Gastrocnemius medialis (tissue), 4 donors: ENCODE measurements at regions of chr2 and their contacts with region 1.

Region 1: DNA sequence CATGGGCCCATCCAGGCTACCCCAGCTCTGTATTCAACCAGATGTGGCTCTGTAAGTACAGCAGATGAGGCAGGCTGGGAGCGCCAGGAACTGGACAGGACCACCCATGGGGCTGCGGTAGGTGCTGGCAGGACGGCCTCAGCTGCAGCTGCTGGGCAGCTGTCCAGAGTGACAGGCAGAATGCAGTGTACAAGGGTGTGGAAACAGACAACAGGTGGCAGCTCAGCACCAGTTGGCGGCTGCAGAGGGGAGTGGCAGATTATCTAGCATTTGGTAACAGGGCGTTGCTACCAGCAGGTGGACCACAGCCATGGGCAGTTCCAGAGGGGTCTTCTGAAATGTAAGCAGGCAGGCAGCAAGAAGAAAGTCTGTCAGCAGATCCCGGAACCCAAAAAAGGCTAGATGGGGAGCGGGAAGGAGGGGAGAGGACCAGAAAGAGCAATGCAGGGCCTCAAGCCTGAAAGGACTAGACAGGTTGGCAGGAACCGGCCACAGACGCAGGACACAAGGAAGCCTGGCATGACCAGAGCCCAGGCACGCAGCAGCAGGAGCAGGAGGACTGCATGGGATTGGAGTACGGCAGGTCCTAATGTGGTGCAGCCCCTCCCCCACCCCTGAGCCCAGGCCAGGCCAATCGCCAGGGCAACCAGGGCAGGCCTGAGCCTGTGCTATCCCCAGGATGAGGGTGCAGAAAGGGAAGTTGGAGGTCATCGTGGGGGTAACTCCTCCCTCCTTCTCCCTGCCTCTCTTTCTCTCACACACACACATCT is 24.7 kb downstream of the PKDCC start:
- DNase-seq: peak; percentile 91 to 98
- ATAC-seq: peak; percentile 87 to 88
- H3K4me3 ChIP-seq: no peak overlapping the region
- H3K27ac ChIP-seq: peak overlapping the region; percentile 86 to 94 (median 90)
- H3K4me1 ChIP-seq: peaks cover 39 to 42% of the 10 kb centered on the region in 2 donors
- H3K27me3 ChIP-seq: no peaks in the 10 kb centered on the region
- CTCF ChIP-seq: peak in 3 of 5 experiments; percentile 28 to 44 (median 44)
- POLR2A ChIP-seq: peak in 1 of 2 donors; percentile 32

Region 2: GRCh38 chr2:41853427-41854216 is 218.9 kb before region 1 on chr2:
- in situ Hi-C with region 1: no loop called
- intact Hi-C with region 1: loop called (anchors 2 kb)
- DNase-seq: no peak
- ATAC-seq: no peak
- H3K4me3 ChIP-seq: no peak overlapping the region
- H3K27ac ChIP-seq: peak overlapping the region; percentile 83 to 93 (median 90)
- H3K4me1 ChIP-seq: peaks cover 12 to 19% of the 10 kb centered on the region in 2 donors
- H3K27me3 ChIP-seq: no peaks in the 10 kb centered on the region
- CTCF ChIP-seq: peak; percentile 59 to 79 (median 68)
- POLR2A ChIP-seq: no peak

Region 3: DNA sequence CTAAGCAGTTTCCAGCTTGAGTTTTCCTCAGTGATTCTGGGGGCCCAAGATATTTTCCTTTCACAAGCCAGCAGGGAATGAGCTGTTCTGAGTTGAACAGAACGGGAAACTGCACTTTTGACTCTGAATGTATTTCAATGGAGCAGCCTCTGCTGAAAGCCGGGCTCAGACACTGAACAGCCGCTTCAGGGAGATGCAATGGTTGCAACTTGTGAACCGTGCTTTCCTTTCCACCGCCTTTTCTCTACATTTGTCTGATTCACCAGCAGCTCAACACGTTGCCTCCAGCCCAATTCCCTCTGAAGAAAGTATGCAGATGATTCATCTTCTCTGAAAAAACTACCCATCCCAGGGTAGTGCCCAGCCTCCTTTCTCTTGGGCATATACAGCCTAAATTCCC is 144.0 kb before region 1 on chr2:
- in situ Hi-C with region 1: no loop called
- intact Hi-C with region 1: loop called (anchors 1 kb)
- DNase-seq: no peak
- ATAC-seq: no peak
- H3K4me3 ChIP-seq: no peak overlapping the region
- H3K27ac ChIP-seq: peak overlapping the region; percentile 89 to 98 (median 98)
- H3K4me1 ChIP-seq: peaks cover 75 to 83% of the 10 kb centered on the region in 2 donors
- H3K27me3 ChIP-seq: no peaks in the 10 kb centered on the region
- CTCF ChIP-seq: no peak
- POLR2A ChIP-seq: no peak

Region 4: DNA sequence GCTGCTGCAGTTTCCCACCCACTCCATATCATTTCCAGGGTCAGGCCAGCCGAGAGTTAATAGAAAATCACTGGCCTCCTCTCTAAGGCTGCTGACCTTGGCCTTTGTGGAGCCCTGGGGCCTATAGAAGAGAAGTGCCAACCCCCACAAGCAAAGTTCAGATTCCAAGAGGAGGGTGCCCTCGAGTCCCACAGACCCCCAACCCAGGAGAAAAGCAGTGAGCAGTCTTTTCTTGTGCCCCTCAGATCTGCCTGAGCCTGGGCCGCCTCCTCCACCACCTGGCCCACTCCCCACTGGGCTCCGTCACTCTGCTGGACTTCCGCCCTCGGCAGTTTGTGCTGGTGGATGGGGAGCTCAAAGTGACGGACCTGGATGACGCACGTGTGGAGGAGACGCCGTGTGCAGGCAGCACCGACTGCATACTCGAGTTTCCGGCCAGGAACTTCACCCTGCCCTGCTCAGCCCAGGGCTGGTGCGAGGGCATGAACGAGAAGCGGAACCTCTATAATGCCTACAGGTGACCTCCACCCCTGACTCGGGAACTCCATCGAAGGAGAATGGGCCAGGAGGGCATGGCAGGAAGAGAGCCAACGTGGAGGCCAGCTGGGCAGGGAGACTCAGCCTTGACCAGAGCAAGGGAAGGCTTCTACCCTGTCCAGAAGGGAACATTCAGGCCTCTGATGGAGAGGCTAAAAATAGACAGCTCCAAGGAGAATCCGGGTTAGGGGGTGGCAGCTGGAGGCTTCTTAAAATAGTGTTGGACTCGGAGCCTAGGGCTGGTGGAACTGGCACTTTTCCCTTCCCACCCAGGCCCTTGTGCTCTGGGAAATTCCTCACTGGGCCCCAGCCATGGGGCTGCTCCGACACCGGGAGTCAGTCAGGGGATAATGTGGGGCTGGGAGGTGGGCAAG is 18.5 kb before region 1 on chr2:
- in situ Hi-C with region 1: no loop called
- intact Hi-C with region 1: loop called (anchors 1 kb)
- DNase-seq: peak; percentile 81 to 94
- ATAC-seq: peak; percentile 74 to 80
- H3K4me3 ChIP-seq: peak overlapping the region; percentile 24 to 86 (median 52)
- H3K27ac ChIP-seq: peak overlapping the region; percentile 94 to 99 (median 98)
- H3K4me1 ChIP-seq: peaks cover 69 to 72% of the 10 kb centered on the region in 2 donors
- H3K27me3 ChIP-seq: no peaks in the 10 kb centered on the region
- CTCF ChIP-seq: no peak
- POLR2A ChIP-seq: peak; percentile 79 to 87

Region 5: GRCh38 chr2:42614838-42615237 is 542.3 kb after region 1 on chr2:
- in situ Hi-C with region 1: no loop called
- intact Hi-C with region 1: no loop called
- DNase-seq: peak; percentile 2 to 21
- ATAC-seq: peak in 1 of 2 donors; percentile 33
- H3K4me3 ChIP-seq: no peak overlapping the region
- H3K27ac ChIP-seq: no peak overlapping the region
- H3K4me1 ChIP-seq: no peaks in the 10 kb centered on the region
- H3K27me3 ChIP-seq: no peaks in the 10 kb centered on the region
- CTCF ChIP-seq: no peak
- POLR2A ChIP-seq: no peak

Region 6: GRCh38 chr2:42754021-42754775 is 681.7 kb after region 1 on chr2:
- in situ Hi-C with region 1: no loop called
- intact Hi-C with region 1: loop called (anchors 10 kb)
- DNase-seq: peak; percentile 90 to 97
- ATAC-seq: peak; percentile 82 to 85
- H3K4me3 ChIP-seq: peak overlapping the region; percentile 15 to 36 (median 26)
- H3K27ac ChIP-seq: peak overlapping the region; percentile 88 to 93 (median 91)
- H3K4me1 ChIP-seq: peaks cover 30 to 32% of the 10 kb centered on the region in 2 donors
- H3K27me3 ChIP-seq: no peaks in the 10 kb centered on the region
- CTCF ChIP-seq: no peak
- POLR2A ChIP-seq: peak; percentile 38 to 43